ENCODE measurements at regions of chr18 and their contacts with region 1.

Region 1: DNA sequence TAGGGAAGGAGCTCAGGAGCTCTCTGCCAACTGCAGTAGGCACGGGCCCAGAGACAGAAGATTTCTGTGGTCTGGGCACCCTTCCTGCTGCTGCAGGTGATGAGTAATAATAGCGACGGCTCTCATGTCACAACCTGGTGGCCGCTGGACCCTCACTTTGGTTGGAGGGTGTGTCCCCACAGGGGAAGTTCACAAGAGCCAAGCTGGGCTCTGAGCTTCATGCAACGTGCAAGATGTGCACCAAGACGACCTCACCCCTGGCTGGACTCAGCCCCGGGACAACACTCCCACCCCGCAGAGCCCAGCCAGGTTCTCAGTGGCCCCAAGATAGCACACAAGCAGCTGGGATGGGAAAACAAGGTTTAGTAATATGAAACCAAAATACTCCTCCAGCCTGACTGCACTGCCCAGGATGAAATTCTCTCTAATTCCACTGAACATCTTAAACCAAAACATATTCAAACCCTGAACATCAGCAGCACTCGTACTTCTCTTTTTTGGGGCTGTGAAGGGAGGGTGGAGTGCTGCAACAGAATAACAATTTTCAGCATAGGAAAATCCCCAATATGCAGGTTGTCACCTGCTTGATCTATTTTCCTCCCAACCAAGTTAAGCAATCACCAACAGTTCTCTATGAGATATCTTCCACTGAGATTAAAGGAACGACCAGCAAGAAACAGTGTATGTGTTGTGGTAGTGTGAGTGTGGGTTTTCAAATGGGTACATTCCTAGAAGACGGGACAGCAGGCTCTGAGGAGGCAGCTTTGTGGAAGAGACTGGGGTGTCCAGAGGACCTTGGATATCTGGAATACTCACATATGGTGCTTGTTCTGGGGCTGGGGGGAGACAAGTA is 26.5 kb downstream of the BCL2 start:
- DNase-seq: no peak
- H3K4me3 Mint-ChIP-seq: peak overlapping the region; percentile 46
- H3K27ac Mint-ChIP-seq: peak overlapping the region; percentile 86
- H3K4me1 Mint-ChIP-seq: peaks cover 65% of the 10 kb centered on the region
- H3K27me3 Mint-ChIP-seq: no peaks in the 10 kb centered on the region

Region 2: DNA sequence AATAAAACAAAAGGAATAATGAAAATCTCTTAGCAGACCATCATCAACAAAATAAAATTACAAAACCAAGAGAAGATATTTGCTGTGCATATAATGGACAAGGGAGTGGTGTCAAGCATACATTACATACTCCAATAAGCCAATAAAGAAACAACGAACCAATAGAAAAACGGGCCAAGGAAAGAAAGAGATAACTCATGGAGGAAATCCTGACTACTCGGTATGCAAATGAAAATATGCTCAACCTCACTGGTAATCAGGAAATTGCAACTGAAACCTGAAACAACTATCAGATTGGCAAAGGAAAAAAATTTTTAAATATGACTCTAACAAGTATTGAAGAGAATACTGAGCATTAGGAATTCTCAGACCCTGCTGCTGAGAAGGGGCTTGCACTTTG is 58.2 kb before region 1 on chr18:
- intact Hi-C with region 1: loop called (anchors 2 kb)
- DNase-seq: no peak
- H3K4me3 Mint-ChIP-seq: peak overlapping the region; percentile 2
- H3K27ac Mint-ChIP-seq: peak overlapping the region; percentile 70
- H3K4me1 Mint-ChIP-seq: peaks cover 76% of the 10 kb centered on the region
- H3K27me3 Mint-ChIP-seq: no peaks in the 10 kb centered on the region

Region 3: DNA sequence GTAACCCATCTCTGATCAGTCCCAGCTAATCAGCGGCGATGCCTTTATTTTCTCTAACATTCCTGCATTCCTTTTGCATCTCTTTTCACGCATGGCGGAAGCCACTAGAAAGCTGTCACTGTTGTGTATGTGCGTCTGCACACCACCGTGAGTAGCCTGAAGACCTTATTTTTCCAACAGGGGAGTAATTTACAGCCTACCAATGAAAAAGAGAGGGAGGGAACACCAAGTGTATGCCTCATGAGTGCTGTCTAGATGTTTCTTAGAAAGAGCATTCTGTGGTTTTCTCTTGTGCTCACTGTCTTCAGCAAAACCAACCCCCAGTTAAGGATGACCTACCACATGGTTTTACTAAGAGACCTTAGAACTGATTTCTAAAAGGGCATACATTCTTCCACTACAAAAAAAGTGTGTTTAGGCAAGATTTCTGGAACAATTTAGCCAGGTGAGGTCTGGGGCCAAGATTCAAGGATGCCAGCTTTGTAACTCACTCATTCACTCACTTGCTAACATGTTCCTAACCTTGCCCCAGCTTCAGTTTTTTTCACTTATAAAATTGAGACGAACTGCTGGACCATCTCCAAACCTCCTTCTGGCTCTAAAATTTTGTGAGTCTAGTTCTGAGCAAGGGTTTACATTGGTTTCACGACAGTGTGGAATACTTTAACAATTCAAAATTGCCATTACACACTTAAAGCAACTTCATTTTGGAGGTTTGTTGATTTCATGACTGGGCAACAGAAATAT is 24.9 kb before region 1 on chr18:
- intact Hi-C with region 1: loop called (anchors 2 kb)
- DNase-seq: no peak
- H3K4me3 Mint-ChIP-seq: peak overlapping the region; percentile 15
- H3K27ac Mint-ChIP-seq: peak overlapping the region; percentile 65
- H3K4me1 Mint-ChIP-seq: peaks cover 74% of the 10 kb centered on the region
- H3K27me3 Mint-ChIP-seq: no peaks in the 10 kb centered on the region

Region 4: DNA sequence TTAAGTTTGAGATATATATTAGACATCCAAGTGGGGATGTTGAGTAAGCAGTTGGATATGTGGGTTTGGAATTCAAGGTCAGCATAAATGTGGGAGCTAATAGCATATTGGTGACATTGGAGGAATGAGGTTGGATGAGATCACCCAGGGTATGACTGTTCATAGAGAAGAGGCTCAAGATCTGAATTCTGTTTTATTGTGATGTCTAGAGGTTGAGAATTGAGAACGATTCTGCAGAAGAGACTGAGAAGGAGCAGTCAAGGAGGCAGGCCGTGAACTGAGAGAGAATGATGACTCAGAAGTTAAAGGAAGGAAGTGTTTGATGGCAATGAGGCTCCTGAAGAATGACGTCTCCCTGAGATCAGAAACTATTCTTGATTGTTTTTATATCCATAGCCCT is 415.6 kb after region 1 on chr18:
- intact Hi-C with region 1: no loop called
- DNase-seq: no peak
- H3K4me3 Mint-ChIP-seq: no peak overlapping the region
- H3K27ac Mint-ChIP-seq: no peak overlapping the region
- H3K4me1 Mint-ChIP-seq: no peaks in the 10 kb centered on the region
- H3K27me3 Mint-ChIP-seq: no peaks in the 10 kb centered on the region